ENCODE measurements at regions of chr17 and their contacts with region 1.

Region 1: DNA sequence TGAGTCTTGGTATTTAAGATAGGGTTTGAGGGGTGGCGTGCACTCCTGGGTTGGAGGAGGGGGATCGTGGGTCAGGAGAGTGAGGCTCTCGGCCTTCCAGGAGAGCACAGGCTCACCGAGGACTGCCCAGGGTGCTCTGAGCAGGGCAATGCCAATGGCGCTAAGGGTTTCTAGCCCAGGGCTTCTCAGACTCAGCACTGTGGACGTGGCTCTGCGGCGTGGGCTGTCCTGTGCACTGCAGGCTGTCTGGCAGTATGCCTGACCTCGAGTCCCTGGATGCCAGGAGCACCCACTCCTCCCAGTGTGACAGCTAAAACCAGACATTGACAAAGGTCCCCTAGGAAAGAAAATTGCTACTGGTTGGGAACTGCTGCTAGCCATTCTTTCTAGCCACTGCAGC is 37.2 kb upstream of the ENDOV start:
- DNase-seq: no peak
- ATAC-seq: no peak
- H3K4me3 ChIP-seq: no peak overlapping the region
- H3K4me3 Mint-ChIP-seq: no peak overlapping the region
- H3K27ac ChIP-seq: no peak overlapping the region
- H3K27ac Mint-ChIP-seq: no peak overlapping the region
- H3K4me1 ChIP-seq: no peaks in the 10 kb centered on the region
- H3K4me1 Mint-ChIP-seq: no peaks in the 10 kb centered on the region
- H3K27me3 ChIP-seq: no peaks in the 10 kb centered on the region
- H3K27me3 Mint-ChIP-seq: no peaks in the 10 kb centered on the region
- CTCF ChIP-seq: no peak

Region 2: DNA sequence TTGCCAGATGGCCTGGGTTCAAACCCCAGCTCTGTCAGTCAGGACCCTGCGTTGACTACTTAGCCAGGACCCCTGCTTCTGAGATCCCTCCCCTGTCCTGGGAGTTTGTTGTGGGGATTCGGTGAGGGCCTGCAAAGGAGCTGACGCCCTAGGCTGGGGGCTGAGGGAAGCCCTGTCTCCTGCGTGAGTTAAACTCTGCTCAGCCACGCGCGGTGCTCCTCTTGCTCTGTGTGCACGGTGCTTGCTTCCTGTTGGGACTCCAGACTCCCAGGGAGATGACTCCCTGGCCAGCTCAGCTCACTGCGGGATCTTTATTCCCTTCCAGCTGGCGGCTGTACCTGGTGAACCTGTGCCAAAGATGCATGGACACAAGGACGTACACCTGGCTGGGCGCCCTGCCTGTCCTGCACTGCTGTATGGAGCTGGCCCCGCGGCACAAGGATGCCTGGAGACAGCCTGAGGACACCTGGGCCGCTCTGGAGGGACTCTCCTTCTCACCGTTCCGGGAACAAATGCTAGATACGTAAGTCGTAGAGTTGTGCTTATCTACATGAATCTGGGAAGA is 79.7 kb before region 1 on chr17:
- CTCF ChIA-PET with region 1: no interaction called
- POLR2A ChIA-PET with region 1: no interaction called
- intact Hi-C with region 1: loop called in 1 of 2 experiments (anchors 2 kb)
- DNase-seq: no peak
- ATAC-seq: no peak
- H3K4me3 ChIP-seq: no peak overlapping the region
- H3K4me3 Mint-ChIP-seq: no peak overlapping the region
- H3K27ac ChIP-seq: no peak overlapping the region
- H3K27ac Mint-ChIP-seq: peak overlapping the region; percentile 49
- H3K4me1 ChIP-seq: no peaks in the 10 kb centered on the region
- H3K4me1 Mint-ChIP-seq: peaks cover 5% of the 10 kb centered on the region
- H3K27me3 ChIP-seq: no peaks in the 10 kb centered on the region
- H3K27me3 Mint-ChIP-seq: no peaks in the 10 kb centered on the region
- CTCF ChIP-seq: no peak